Prostate gland (tissue), 2 donors: ENCODE measurements at regions of chr13 and their contacts with region 1.

Region 1: GRCh38 chr13:20814224-20814910 is 40.6 kb upstream of the EEF1AKMT1 start:
- DNase-seq: peak; percentile 30
- H3K4me3 ChIP-seq: no peak overlapping the region
- H3K27ac ChIP-seq: no peak overlapping the region
- H3K4me1 ChIP-seq: no peaks in the 10 kb centered on the region
- H3K27me3 ChIP-seq: no peaks in the 10 kb centered on the region
- CTCF ChIP-seq: no peak
- POLR2A ChIP-seq: no peak

Region 2: DNA sequence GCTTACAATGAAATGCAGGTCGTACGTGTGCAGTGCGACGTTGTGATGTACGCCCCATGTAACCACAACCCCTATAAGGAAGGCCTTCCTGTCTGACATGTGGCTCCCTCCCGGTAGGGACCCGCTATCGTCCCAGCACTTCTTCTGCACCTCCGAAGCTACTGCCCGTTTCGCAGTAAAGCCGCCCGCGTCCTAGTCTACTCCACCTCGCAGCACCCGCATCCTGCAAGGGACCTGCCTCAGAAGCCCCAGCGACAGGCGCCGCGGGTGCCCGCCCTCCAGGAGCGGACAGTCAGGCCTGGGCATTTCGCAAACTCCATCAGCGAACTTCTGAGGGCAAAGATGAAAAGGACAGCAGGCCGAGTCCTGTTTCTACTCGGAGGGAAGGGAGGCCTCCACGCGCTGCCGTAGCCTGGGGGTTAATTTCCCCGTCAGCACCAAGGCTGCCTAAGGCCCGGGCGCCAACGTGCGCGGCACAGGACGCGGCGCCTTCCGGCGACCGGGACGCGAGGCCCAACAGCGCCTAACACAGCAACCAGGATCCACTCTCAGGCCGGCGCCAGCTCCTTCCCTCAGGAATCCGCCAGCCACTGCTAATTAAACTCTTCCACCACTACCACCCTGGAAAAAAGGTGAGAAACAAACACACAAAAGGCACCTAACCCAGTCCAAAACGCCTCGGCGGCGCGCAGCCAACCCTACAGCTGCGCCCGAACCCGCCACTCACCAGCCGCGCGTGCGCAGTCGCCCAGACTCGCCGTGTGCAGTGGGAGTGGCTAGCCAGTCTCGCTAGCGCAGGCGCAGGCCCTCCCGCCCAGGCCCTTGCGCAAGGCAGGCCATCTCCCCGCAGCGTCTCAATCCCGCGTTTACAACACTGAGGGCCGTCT is 40.9 kb before region 1 on chr13 and contains the start of gene EEF1AKMT1:
- intact Hi-C with region 1: loop called (anchors 5 kb)
- DNase-seq: peak; percentile 83
- H3K4me3 ChIP-seq: peak within 1 kb of the TSS; percentile 61 to 63
- H3K27ac ChIP-seq: peak within 1 kb of the TSS; percentile 83 to 89
- H3K4me1 ChIP-seq: no peaks in the 10 kb centered on the region
- H3K27me3 ChIP-seq: no peaks in the 10 kb centered on the region
- CTCF ChIP-seq: no peak
- POLR2A ChIP-seq: peak; percentile 79
- total RNA-seq, gene EEF1AKMT1: 11.4 to 31.6 TPM

Region 3: GRCh38 chr13:21043898-21044297 is 229.5 kb after region 1 on chr13:
- intact Hi-C with region 1: loop called (anchors 10 kb)
- DNase-seq: no peak
- H3K4me3 ChIP-seq: no peak overlapping the region
- H3K27ac ChIP-seq: peak overlapping the region; percentile 9 to 33
- H3K4me1 ChIP-seq: peaks cover 10% of the 10 kb centered on the region
- H3K27me3 ChIP-seq: no peaks in the 10 kb centered on the region
- CTCF ChIP-seq: no peak
- POLR2A ChIP-seq: no peak